IMR-90 (cell line): ENCODE measurements at regions of chr22 and their contacts with region 1.

Region 1: GRCh38 chr22:43273902-43274484 is 69.2 kb downstream of the SCUBE1 start:
- DNase-seq: peak; percentile 46
- ATAC-seq: peak; percentile 87
- H3K4me3 ChIP-seq: no peak overlapping the region
- H3K27ac ChIP-seq: no peak overlapping the region
- H3K4me1 ChIP-seq: peaks cover 2% of the 10 kb centered on the region; the same call in 1 of the 2 replicates
- H3K27me3 ChIP-seq: peaks cover 22% of the 10 kb centered on the region
- CTCF ChIP-seq: peak; percentile 72
- POLR2A ChIP-seq: no peak
- RAD21 ChIP-seq: peak; percentile 76

Region 2: DNA sequence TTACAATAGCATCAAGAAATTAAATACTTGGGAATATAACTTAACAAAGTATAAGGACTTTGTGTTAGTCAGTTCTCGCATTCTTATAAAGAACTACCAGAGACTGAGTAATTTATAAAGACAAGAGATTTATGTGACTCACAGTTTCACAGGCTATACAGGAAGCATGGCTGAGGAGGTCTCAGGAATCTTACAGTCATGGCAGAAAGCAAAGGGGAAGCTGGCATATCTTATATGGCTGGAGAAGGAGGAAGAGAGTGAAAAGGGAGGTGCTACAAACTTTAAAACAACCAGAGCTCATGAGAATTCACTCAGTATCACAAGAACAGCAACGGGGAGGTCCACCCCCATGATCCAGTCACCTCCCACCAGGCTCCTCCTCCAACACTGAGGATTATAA is 1505.6 kb before region 1 on chr22:
- CTCF ChIA-PET with region 1: no interaction called
- POLR2A ChIA-PET with region 1: no interaction called
- dilution Hi-C with region 1: no loop called
- in situ Hi-C with region 1: no loop called
- intact Hi-C with region 1: no loop called
- DNase-seq: peak; percentile 34
- ATAC-seq: no peak
- H3K4me3 ChIP-seq: no peak overlapping the region
- H3K27ac ChIP-seq: no peak overlapping the region
- H3K4me1 ChIP-seq: no peaks in the 10 kb centered on the region
- H3K27me3 ChIP-seq: peaks cover 2% of the 10 kb centered on the region
- CTCF ChIP-seq: no peak
- POLR2A ChIP-seq: no peak
- RAD21 ChIP-seq: no peak

Region 3: DNA sequence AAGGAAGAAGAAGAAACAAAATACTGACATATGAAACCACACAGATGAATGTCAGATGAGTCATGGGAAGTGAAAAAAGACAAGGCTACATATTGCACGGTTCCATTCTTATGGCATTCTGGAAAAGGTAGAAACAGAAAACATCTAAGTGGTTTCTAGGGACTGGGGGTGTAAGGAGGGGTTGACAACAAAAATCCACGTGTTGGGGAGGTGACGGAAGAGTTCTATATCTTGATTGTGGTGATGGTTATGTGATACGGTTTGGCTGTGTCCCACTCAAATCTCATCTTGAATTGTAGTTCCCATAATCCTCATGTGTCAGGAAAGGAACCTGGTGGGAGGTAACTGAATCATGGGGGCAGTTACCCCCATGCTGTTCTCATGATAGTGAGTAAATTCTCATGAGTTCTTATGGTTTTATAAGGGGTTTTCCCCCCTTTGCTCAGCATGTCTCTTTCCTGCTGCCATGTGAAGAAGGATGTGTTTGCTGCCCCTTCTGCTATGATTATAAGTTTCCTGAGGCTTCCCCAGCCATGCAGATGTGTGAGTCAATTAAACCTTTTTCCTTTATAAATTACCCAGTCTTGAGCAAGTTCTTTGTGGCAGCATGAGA is 410.5 kb before region 1 on chr22:
- CTCF ChIA-PET with region 1: no interaction called
- POLR2A ChIA-PET with region 1: no interaction called
- dilution Hi-C with region 1: no loop called
- in situ Hi-C with region 1: no loop called
- intact Hi-C with region 1: no loop called
- DNase-seq: peak; percentile 88
- ATAC-seq: peak; percentile 45; the same call in 1 of the 2 replicates
- H3K4me3 ChIP-seq: no peak overlapping the region
- H3K27ac ChIP-seq: 0 out of 2 replicates have a peak overlapping the region, but pooled peaks have one; percentile 19
- H3K4me1 ChIP-seq: peaks cover 6% of the 10 kb centered on the region; the same call in 1 of the 2 replicates
- H3K27me3 ChIP-seq: no peaks in the 10 kb centered on the region
- CTCF ChIP-seq: no peak
- POLR2A ChIP-seq: no peak
- RAD21 ChIP-seq: no peak

Region 4: DNA sequence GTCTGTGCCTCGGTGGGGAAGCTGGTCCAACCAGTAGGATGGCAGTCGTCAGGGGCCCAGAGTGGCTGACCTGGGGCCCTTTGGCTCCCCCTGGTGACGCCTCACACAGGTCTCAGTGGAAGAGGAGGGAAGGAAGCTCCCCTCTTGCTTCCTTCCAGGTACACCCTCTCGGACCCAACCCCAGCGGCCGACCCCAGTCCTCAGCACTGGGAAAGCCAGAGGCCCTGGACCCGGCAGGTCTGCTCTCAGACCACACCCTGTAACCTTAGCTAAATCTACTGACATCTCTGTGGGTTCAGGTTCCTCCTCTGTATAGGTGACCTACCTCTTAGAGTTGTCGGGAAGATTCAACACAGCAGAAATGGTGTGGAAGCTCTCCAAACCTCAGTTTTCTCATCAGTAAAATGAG is 72.5 kb after region 1 on chr22:
- CTCF ChIA-PET with region 1: interaction called, 26 read pairs
- POLR2A ChIA-PET with region 1: interaction called, 3 read pairs
- dilution Hi-C with region 1: no loop called
- in situ Hi-C with region 1: loop called (anchors 10 kb)
- intact Hi-C with region 1: loop called (anchors 1 kb)
- DNase-seq: no peak
- ATAC-seq: peak; percentile 73
- H3K4me3 ChIP-seq: no peak overlapping the region
- H3K27ac ChIP-seq: no peak overlapping the region
- H3K4me1 ChIP-seq: no peaks in the 10 kb centered on the region
- H3K27me3 ChIP-seq: peaks cover 55% of the 10 kb centered on the region
- CTCF ChIP-seq: peak; percentile 48
- POLR2A ChIP-seq: no peak
- RAD21 ChIP-seq: peak; percentile 48

Region 5: GRCh38 chr22:43377896-43378704 is 104.1 kb after region 1 on chr22:
- CTCF ChIA-PET with region 1: interaction called, 4 read pairs
- POLR2A ChIA-PET with region 1: no interaction called
- dilution Hi-C with region 1: no loop called
- in situ Hi-C with region 1: loop called (anchors 10 kb)
- intact Hi-C with region 1: no loop called
- DNase-seq: peak; percentile 3
- ATAC-seq: peak; percentile 24; the same call in 1 of the 2 replicates
- H3K4me3 ChIP-seq: no peak overlapping the region
- H3K27ac ChIP-seq: no peak overlapping the region
- H3K4me1 ChIP-seq: peaks cover 2% of the 10 kb centered on the region; the same call in 1 of the 2 replicates
- H3K27me3 ChIP-seq: peaks cover 14% of the 10 kb centered on the region
- CTCF ChIP-seq: no peak
- POLR2A ChIP-seq: no peak
- RAD21 ChIP-seq: no peak